AG04450 (cell line): ENCODE measurements at regions of chr9 and their contacts with region 1.

Region 1: DNA sequence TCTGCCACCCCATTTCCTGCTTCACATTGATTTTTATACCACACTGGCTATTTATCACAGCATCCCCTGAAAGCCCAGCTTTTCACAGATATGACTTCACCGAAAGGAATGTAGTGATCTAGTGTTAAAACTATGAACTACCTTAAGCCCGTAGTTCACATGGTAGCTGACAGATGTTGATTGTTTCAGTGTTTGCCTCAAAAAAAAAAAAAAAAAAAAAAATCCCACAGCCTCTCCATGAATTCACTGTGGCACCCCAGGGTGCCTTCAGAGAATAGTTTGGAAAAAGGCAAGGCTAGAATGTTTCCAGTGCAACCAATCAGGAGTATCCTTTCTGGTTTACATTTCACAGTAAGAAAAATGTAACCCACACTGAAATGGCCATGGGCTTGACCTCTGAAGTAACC is 37.1 kb downstream of the GLIS3 start:
- DNase-seq: peak; percentile 58
- H3K4me3 ChIP-seq: no peak overlapping the region
- H3K27ac ChIP-seq: peak overlapping the region; percentile 0
- H3K27me3 ChIP-seq: no peaks in the 10 kb centered on the region
- CTCF ChIP-seq: no peak

Region 2: DNA sequence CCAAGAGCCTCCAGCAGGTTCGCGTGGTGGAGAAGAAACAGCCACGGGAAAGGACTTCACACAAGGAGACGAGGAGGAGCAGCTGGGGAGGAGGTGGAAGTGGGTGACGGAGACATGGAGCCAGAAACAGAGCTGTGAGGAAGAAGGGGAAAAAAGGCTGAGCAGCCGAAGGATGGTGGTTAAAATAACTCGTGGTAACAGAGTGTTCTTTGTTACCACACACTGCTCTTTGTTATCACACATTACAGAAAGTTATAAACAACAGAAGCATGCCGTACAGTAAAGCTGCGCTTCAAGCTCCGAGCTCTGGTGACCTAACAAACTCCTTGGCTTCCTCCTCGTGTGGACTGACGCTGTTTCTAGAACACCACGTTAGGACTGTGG is 178.3 kb before region 1 on chr9:
- CTCF ChIA-PET with region 1: no interaction called
- POLR2A ChIA-PET with region 1: interaction called, 16 read pairs
- DNase-seq: peak; percentile 63
- H3K4me3 ChIP-seq: peak overlapping the region; percentile 41
- H3K27ac ChIP-seq: peak overlapping the region; percentile 97
- H3K27me3 ChIP-seq: no peaks in the 10 kb centered on the region
- CTCF ChIP-seq: no peak